Sciatic nerve (tissue), 2 donors: ENCODE measurements at regions of chr3 and their contacts with region 1.

Region 1: DNA sequence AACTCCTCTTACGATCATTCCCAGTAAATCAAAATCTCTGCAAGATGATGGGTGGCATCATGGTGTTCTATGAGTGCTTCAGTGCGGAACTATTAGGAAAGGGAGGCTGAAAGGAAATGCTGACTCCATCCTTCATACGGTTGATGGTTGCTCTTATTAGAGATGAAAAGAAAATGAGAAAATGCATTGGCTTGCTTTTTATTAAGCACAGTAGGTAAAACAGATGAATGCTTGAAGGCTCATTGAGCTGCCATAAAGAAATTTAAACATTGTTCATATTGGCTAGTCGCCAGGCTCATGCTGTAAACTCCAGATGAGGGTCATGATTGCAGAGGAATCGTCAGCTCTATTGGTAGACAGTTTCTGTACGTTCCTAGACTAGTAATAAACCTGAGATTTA is 115.8 kb downstream of the EPHA3 start:
- DNase-seq: no peak
- ATAC-seq: no peak

Region 2: DNA sequence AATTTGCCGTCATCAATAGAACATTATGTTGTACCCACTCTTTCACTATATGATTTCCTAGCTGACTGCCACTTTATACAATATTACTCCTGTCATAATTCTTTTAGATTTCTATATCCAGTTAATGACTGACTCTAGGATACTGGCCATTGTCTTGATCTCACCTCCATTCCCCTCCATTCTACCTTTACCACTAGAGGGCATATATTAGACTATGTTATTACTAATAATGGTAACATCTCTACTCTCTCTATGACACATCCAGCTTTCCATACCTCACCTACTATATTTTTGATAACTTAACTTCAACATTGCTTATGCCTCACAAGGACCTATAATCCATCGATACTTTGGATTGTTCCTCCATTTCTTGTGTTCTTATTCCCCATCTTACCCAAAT is 1915.4 kb before region 1 on chr3:
- intact Hi-C with region 1: no loop called
- DNase-seq: no peak
- ATAC-seq: no peak

Region 3: GRCh38 chr3:89238846-89239245 is 15.7 kb after region 1 on chr3:
- intact Hi-C with region 1: loop called (anchors 2 kb)
- DNase-seq: no peak
- ATAC-seq: no peak